ENCODE measurements at regions of chr2 and their contacts with region 1.

Region 1: GRCh38 chr2:203718087-203718486 is 11.6 kb downstream of the CD28 start:
- DNase-seq: peak; percentile 90
- ATAC-seq: peak; percentile 80
- H3K4me3 Mint-ChIP-seq: peak overlapping the region; percentile 43
- H3K27ac Mint-ChIP-seq: peak overlapping the region; percentile 88
- H3K4me1 Mint-ChIP-seq: peaks cover 96% of the 10 kb centered on the region
- H3K27me3 Mint-ChIP-seq: no peaks in the 10 kb centered on the region
- CTCF ChIP-seq: no peak

Region 2: DNA sequence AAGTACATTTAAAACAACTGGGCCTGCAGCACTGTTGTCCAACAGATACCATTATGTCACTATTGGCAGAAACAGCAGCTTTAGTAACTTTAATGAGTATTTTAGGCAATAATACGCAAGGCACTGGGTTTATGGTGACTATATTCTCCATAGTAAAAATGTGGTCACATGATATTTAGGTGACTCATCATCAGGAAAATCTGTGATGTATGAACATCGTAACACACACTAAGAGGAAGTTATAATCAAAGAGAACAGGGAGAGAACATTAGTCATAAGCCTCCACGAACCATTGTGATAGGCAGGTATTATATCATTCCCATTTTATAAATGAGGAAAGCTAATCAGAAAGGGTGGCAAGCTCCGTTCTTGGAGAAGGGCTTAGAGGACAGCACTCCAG is 219.9 kb before region 1 on chr2:
- CTCF ChIA-PET with region 1: no interaction called
- POLR2A ChIA-PET with region 1: no interaction called
- intact Hi-C with region 1: loop called (anchors 10 kb)
- DNase-seq: no peak
- ATAC-seq: peak; percentile 68
- H3K4me3 Mint-ChIP-seq: no peak overlapping the region
- H3K27ac Mint-ChIP-seq: no peak overlapping the region
- H3K4me1 Mint-ChIP-seq: peaks cover 21% of the 10 kb centered on the region
- H3K27me3 Mint-ChIP-seq: no peaks in the 10 kb centered on the region
- CTCF ChIP-seq: no peak

Region 3: DNA sequence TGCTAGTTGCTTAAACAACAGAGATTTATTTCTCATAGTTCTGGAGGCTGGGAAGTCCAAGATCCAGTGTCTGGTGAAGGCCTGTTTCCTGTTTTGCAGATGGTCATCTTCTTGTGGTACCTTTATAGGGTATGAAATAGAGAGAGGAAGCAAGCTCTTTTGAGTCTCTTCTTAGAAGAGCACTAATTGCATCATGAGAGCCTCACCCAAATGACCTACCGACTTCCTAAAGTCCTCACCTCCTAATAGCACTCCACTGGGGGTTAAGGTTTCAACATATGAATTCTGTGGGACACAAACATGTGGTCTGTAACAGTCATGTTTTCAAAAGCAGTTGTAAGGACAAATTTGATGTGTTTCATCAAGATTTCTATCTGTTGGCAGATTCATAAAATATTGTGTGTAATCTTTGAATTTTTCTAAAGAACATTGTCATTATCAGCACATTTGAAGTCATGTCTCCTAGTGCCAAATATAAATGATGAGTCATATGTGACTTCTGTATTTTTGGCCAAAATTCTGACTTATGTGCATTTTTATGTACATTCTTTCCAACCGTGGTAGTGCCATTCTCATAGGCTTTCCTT is 33.7 kb after region 1 on chr2:
- CTCF ChIA-PET with region 1: interaction called, 11 read pairs
- POLR2A ChIA-PET with region 1: interaction called, 24 read pairs
- intact Hi-C with region 1: no loop called
- DNase-seq: no peak
- ATAC-seq: no peak
- H3K4me3 Mint-ChIP-seq: no peak overlapping the region
- H3K27ac Mint-ChIP-seq: peak overlapping the region; percentile 66
- H3K4me1 Mint-ChIP-seq: peaks cover 49% of the 10 kb centered on the region
- H3K27me3 Mint-ChIP-seq: no peaks in the 10 kb centered on the region
- CTCF ChIP-seq: no peak

Region 4: GRCh38 chr2:203804070-203804469 is 86.0 kb after region 1 on chr2:
- CTCF ChIA-PET with region 1: interaction called, 5 read pairs
- POLR2A ChIA-PET with region 1: interaction called, 11 read pairs
- intact Hi-C with region 1: loop called (anchors 5 kb)
- DNase-seq: peak; percentile 72
- ATAC-seq: peak; percentile 47
- H3K4me3 Mint-ChIP-seq: no peak overlapping the region
- H3K27ac Mint-ChIP-seq: peak overlapping the region; percentile 88
- H3K4me1 Mint-ChIP-seq: peaks cover 87% of the 10 kb centered on the region
- H3K27me3 Mint-ChIP-seq: no peaks in the 10 kb centered on the region
- CTCF ChIP-seq: no peak

Measured in activated CD8-positive, alpha-beta T cell treated with anti-CD3 and anti-CD28 coated beads for 36 hours (primary cell).